ENCODE measurements at regions of chr1 and their contacts with region 1.

Region 1: DNA sequence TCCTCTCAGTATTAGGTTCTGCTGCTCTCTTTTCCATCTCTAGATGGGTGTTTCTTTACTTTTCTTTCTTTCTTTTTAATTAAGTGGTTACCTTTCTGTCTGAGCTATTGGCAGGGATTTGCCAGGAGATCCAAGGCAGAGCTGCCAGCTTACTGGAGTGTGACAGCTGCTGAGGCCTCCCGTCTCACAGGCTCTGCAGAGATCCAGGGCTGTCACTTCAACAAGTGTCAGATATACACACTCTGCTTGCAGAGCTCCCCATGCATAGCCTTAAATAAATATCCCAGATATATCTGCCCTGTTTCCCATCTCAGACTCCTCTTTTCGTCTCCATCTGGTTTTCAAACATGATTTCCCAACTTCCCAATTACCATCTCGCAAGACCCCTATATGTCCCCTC is 124.3 kb downstream of the NOS1AP start:
- DNase-seq: no peak
- H3K4me3 ChIP-seq: no peak overlapping the region
- H3K27ac ChIP-seq: no peak overlapping the region
- H3K4me1 ChIP-seq: peaks cover 37% of the 10 kb centered on the region
- H3K27me3 ChIP-seq: no peaks in the 10 kb centered on the region
- CTCF ChIP-seq: no peak
- POLR2A ChIP-seq: no peak

Region 2: DNA sequence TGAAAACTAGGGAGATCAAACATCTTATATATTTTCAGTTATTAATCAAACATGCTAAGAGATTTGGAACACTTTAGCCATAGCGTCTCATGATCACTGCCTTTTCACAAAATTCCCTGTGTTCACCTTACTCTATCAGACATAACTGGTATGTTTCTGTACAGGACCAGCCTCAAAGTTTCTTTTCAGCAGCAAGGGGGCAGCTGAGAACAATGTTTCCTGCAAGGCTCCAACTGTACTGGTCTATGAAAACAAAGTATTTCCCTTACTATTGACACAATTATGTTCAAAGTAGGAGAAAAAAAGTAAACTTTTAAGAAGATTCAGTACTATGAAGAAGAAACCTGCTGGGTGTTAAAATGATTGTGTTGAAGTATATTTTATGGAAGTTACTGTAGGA is 329.2 kb before region 1 on chr1:
- CTCF ChIA-PET with region 1: no interaction called
- POLR2A ChIA-PET with region 1: no interaction called
- dilution Hi-C with region 1: no loop called
- intact Hi-C with region 1: no loop called
- DNase-seq: peak; percentile 69
- H3K4me3 ChIP-seq: no peak overlapping the region
- H3K27ac ChIP-seq: no peak overlapping the region
- H3K4me1 ChIP-seq: peaks cover 6% of the 10 kb centered on the region
- H3K27me3 ChIP-seq: no peaks in the 10 kb centered on the region
- CTCF ChIP-seq: peak; percentile 7 to 27
- POLR2A ChIP-seq: no peak

Region 3: DNA sequence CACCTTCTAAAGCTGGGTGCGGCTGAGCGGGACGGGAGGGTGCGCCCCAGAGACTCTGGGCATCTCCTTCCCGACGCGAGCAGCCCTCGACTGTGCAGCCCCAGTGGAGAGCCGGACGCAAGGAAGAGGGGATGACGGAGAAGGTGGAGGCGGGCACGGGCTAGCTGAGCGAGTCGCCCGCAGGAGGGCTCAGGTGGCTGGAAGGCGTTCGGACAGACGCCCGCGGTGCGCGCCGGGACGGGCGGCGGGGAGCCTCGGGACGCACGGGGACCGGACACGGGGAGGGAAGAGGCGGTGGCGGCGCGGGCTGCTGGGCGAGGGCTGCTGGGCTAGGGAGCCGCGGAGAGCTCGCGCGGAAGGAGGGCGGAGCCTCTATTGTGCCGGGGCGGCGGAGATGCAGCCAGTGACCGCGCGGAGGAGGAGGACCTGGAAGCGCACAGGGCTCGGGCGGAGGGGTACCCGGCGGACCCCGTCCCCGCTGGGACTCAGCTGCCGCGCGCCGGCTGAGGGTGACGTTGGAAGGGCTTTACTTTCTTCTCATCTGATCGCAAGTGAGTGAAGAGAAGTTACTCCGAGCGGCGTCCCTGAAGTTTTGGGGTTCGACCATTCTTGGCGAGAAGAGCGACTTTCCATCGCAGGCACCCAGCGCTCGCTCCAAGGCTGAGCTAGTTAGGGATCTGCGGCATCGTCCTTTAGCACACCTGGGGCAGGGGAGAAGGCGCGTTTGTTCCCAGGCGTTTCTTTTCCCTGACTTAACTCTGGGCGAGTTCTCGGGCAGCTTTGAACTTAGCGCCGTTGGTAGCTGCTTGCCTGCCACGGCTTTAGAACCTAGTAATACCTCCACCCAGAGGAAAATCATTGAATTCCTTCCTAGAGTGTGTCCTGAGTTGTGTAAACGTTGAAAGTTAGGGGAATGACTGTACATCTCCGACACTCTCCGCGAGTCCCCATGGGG is 170.0 kb before region 1 on chr1 and contains the start of gene OLFML2B:
- CTCF ChIA-PET with region 1: no interaction called
- POLR2A ChIA-PET with region 1: no interaction called
- dilution Hi-C with region 1: no loop called
- intact Hi-C with region 1: no loop called
- DNase-seq: peak; percentile 70
- H3K4me3 ChIP-seq: peak within 1 kb of the TSS; percentile 9 to 55 (median 45)
- H3K27ac ChIP-seq: no peak within 1 kb of the TSS
- H3K4me1 ChIP-seq: peaks cover 8% of the 10 kb centered on the region
- H3K27me3 ChIP-seq: peaks cover 0 to 3% of the 10 kb centered on the region in 2 experiments
- CTCF ChIP-seq: peak; percentile 19 to 31
- POLR2A ChIP-seq: no peak
- total RNA-seq, gene OLFML2B: 0.51 and 0.62 TPM in 2 replicates

Region 4: GRCh38 chr1:162069328-162070093 is 124.3 kb before region 1 on chr1 and contains the start of gene NOS1AP:
- CTCF ChIA-PET with region 1: no interaction called
- POLR2A ChIA-PET with region 1: no interaction called
- dilution Hi-C with region 1: no loop called
- intact Hi-C with region 1: loop called (anchors 10 kb)
- DNase-seq: peak; percentile 72
- H3K4me3 ChIP-seq: peak within 1 kb of the TSS; percentile 36 to 92 (median 61)
- H3K27ac ChIP-seq: no peak within 1 kb of the TSS
- H3K4me1 ChIP-seq: peaks cover 13% of the 10 kb centered on the region
- H3K27me3 ChIP-seq: no peaks in the 10 kb centered on the region
- CTCF ChIP-seq: no peak
- POLR2A ChIP-seq: no peak
- total RNA-seq, gene NOS1AP: 3.2 and 5.4 TPM in 2 replicates

Region 5: DNA sequence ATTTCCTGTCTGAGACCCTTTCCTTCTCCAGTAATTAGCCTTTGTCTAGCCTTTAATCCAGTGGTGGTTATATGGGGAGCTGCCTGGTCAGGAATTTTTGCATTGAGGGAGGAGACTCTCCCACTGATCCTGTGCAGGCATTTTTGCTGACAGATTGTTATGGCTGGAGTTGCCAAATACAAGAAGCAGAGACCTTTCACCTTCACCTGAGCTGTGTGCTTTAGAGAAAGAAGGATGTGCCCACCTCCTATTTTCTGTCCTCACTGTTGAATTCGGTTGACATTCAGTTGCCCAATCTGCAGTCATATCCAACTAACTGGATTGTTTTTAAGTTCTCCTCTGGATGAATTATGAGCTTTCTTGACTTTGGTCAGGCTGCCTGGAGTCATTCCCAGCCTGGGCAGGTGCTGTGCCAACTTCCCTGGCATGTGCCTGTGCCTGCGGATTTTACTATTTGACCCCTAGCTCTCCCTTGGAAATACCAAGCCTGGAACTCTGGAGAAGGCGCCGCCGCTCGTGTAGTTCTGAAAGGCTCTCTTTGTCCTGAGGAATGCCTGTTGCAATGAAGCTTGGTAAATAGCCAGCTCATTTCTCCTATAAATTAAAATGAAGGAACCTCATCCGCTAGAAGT is 19.6 kb after region 1 on chr1:
- CTCF ChIA-PET with region 1: interaction called, 3 read pairs
- POLR2A ChIA-PET with region 1: no interaction called
- dilution Hi-C with region 1: no loop called
- intact Hi-C with region 1: loop called (anchors 2 kb)
- DNase-seq: peak; percentile 80
- H3K4me3 ChIP-seq: no peak overlapping the region
- H3K27ac ChIP-seq: no peak overlapping the region
- H3K4me1 ChIP-seq: peaks cover 30% of the 10 kb centered on the region
- H3K27me3 ChIP-seq: no peaks in the 10 kb centered on the region
- CTCF ChIP-seq: no peak
- POLR2A ChIP-seq: no peak